ENCODE measurements at regions of chr18 and their contacts with region 1.

Region 1: DNA sequence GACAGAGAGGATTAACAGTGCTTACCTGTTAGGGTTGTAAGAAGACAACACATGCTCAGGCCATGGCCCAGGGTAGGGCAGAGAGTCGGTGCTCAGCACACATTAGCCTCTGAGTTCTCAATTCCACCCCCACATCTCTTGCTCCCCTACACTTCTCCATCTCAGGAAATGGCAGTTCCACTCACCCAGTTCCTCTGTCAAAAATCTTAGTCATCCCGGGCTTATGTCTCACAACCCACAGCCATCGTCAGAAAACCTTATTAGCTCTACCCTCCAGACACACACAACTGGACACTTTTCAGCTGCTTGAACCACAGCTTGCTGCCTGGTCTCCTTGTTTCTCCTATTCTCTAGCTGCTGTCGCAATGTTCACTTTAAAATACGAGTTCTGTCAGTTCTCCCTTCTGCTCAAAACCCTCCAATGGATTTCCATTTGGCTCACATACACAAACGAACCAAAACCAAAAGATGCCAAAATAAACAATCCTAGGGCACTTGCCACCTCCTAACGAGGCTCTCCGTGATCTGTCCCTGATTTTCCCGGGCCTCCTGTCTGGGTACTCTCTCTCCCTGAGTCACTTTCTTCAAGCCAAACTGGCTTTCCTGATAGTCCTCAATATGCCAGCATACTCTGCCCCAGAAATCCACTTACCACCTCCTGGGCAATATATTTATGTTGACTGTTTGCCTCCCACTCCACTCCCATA is 89.7 kb downstream of the KCTD1 start:
- DNase-seq: no peak
- ATAC-seq: peak; percentile 9; the same call in 2 of the 3 replicates
- H3K4me3 ChIP-seq: no peak overlapping the region
- H3K27ac ChIP-seq: no peak overlapping the region
- H3K4me1 ChIP-seq: peaks cover 0 to 3% of the 10 kb centered on the region in 2 experiments; a peak in 1 of 5 replicates
- H3K27me3 ChIP-seq: peaks cover 5 to 33% of the 10 kb centered on the region in 2 experiments; a peak in 2 of 5 replicates
- CTCF ChIP-seq: no peak
- EP300 ChIP-seq: no peak
- POLR2A ChIP-seq: no peak
- RAD21 ChIP-seq: no peak

Region 2: DNA sequence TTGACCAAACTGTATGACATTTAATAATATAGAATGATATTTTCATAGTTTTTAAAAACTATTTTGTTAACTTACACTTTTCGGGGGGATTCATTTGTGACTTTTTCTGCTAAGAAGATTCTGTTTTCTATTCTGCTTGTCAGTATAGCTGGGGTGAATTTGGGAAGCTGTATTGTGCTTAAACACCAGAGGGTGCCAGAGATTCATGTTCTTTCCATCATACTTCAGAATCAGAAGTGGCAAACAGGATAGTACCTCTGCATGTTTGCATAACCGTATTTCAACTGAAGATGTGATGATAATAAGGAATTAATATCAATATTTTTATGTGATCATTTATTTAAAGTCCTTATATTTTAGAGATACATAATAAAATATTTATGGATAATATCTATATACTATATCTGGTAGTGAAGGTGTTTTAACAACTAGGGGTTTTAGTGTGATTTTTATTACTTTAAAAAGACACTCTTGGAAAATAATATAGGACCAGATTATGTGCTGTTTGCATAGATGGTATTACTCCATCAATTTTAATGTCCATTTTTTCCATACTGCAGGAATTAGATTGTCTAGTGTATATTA is 151.4 kb before region 1 on chr18:
- CTCF ChIA-PET with region 1: no interaction called
- POLR2A ChIA-PET with region 1: no interaction called
- in situ Hi-C with region 1: no loop called
- intact Hi-C with region 1: loop called (anchors 10 kb)
- DNase-seq: peak; percentile 44 to 68 (median 48)
- ATAC-seq: peak; percentile 92
- H3K4me3 ChIP-seq: no peak overlapping the region
- H3K27ac ChIP-seq: no peak overlapping the region
- H3K4me1 ChIP-seq: no peaks in the 10 kb centered on the region
- H3K27me3 ChIP-seq: no peaks in the 10 kb centered on the region
- CTCF ChIP-seq: peak; percentile 50 to 72 (median 61)
- EP300 ChIP-seq: no peak
- POLR2A ChIP-seq: no peak
- RAD21 ChIP-seq: peak; percentile 54 to 67

Measured in K562 (cell line).